HAP-1 (cell line): ENCODE measurements at regions of chr12 and their contacts with region 1.

Region 1: DNA sequence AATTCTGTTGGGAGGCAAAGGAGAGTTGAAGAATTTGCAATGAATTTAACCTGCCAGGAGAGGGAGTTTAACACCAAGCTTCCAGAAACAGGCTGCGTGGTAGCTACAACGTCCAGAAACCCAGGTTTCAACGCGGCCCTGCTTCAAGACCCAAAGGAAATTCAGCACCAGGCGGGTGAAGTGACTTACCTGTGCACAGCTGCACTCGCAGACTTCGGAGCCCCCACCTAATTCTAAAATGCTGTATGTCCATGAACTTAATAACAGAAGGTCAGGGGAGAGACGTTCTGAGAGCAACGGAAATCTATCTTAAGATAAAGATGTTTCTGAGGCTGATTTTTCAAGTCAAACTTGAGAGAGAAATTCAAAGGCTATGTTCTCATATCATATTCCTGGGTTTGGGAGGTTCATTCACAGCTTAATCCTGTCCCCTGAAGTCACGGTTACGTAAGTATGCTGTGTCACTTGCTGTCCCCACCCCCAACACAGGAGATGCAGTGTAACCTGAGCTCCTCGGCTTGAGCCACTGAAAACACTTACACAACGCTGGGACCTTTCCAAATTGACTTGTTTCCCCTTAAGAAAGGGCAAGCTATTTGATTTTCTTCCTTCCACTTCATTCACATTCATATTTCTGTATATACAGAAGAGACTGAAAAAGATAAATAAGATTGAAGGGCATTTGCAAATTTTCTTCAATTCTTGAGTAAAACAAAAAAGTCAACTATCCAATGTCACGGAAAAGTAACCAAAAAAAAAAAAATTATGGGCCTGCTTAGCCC is 22.7 kb downstream of the CLIP1 start:
- DNase-seq: peak; percentile 85 to 90
- H3K4me3 ChIP-seq: 0 out of 2 replicates have a peak overlapping the region, but pooled peaks have one; percentile 1
- H3K4me1 ChIP-seq: peaks cover 10% of the 10 kb centered on the region
- H3K27me3 ChIP-seq: no peaks in the 10 kb centered on the region

Region 2: GRCh38 chr12:122051231-122051876 is 348.4 kb before region 1 on chr12:
- in situ Hi-C with region 1: no loop called
- DNase-seq: no peak
- H3K4me3 ChIP-seq: no peak overlapping the region
- H3K4me1 ChIP-seq: no peaks in the 10 kb centered on the region
- H3K27me3 ChIP-seq: no peaks in the 10 kb centered on the region

Region 3: GRCh38 chr12:122471324-122472226 is 71.8 kb after region 1 on chr12:
- in situ Hi-C with region 1: loop called (anchors 5 kb)
- DNase-seq: peak in 1 of 2 experiments; percentile 51
- H3K4me3 ChIP-seq: no peak overlapping the region
- H3K4me1 ChIP-seq: no peaks in the 10 kb centered on the region
- H3K27me3 ChIP-seq: no peaks in the 10 kb centered on the region

Region 4: DNA sequence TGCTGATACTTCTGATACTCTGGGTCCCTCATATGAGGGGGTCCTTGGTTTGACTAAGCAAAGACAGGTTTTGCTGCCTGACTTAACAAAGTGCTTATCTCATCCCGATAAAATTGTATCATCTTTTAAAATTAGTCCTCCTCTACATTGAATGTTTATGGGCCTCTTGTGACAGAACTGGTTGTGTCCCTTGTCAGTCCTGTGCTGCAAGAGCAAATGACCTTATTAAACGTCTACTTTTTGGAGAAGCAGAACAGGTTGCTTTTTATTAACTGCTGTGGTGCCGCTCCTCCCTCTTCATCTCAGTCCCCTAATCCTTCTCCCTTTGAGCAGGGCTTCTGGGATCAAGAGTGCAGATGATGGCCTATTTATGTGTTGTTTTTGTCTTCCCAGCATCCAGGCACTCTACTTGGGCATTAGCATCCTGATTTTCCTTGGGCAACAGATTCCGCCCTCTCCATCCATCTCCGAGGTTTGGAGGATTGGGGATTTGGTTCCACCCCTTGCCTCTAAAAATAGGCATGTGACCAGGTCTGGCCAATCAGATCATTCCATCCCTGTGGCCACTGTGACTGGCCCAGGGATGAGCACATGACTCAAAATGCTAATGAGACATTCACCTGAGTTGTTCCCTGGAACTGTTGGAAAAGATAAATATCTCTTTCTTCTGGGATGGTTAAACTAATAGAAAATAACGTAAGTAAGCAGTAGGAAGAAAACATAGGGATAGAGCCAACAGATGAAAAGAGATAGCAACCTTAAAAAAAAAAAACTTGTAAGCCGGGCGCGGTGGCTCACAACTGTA is 350.0 kb after region 1 on chr12:
- in situ Hi-C with region 1: no loop called
- DNase-seq: peak; percentile 52 to 83
- H3K4me3 ChIP-seq: no peak overlapping the region
- H3K4me1 ChIP-seq: peaks cover 41% of the 10 kb centered on the region
- H3K27me3 ChIP-seq: no peaks in the 10 kb centered on the region